ENCODE measurements at regions of chr4 and their contacts with region 1.

Region 1: GRCh38 chr4:173013232-173013930 is 155.2 kb upstream of the GALNT7 start:
- DNase-seq: peak; percentile 57
- CTCF ChIP-seq: peak; percentile 65

Region 2: GRCh38 chr4:172998527-172999469 is 14.6 kb before region 1 on chr4:
- CTCF ChIA-PET with region 1: interaction called, 53 read pairs
- POLR2A ChIA-PET with region 1: no interaction called
- DNase-seq: no peak
- CTCF ChIP-seq: no peak

Region 3: GRCh38 chr4:173091362-173091761 is 78.0 kb after region 1 on chr4:
- CTCF ChIA-PET with region 1: no interaction called
- POLR2A ChIA-PET with region 1: no interaction called
- DNase-seq: no peak
- CTCF ChIP-seq: no peak

Region 4: DNA sequence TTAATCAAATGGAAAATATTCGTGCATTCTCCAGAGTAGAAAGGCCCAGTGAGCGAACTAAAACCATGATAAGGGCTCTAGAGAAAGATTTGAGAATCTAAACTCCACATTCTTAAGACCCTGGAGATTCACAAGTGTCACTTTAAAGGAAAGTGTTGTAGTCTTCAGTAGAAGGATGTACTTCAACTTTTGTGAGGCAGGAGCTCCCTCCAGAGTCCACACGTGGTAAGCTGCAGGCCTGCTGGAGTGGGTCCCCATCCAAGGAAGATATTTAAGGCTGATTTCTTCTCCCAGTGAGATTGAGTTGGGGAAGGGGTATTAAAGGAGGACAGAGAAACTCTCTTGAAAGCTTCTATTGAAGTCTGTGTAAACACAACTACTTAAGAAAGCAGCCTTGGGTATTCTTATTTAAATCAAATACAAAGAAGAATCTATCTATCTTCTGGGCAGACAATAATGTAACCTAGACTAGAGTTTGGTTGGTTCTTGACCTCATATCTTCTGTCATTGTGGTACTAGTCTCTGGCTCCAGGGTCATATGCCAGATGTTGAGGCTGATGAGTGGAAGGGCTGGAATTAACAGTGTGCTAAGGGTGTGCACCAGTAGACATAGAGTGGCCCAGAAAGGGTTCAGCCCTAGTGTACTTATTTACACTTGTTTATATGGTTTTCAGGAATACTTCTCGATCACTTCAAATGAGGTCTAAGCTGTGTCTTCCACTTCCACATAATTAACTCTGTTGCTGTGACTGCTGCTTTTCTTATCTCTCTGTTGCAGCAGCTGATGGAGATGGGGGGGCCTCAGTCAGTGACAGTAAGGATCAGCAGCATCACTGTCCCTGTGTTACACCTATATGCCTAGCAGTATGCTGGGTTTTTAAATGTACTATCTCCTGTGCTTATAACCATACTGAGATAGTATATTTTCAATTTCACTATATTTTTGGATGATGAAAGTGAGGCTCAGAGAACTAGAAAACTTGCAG is 244.6 kb after region 1 on chr4:
- CTCF ChIA-PET with region 1: interaction called, 160 read pairs
- POLR2A ChIA-PET with region 1: no interaction called
- DNase-seq: peak; percentile 44
- CTCF ChIP-seq: peak; percentile 83

Region 5: GRCh38 chr4:173270312-173271027 is 257.1 kb after region 1 on chr4:
- CTCF ChIA-PET with region 1: interaction called, 20 read pairs
- POLR2A ChIA-PET with region 1: no interaction called
- DNase-seq: no peak
- CTCF ChIP-seq: no peak

Region 6: DNA sequence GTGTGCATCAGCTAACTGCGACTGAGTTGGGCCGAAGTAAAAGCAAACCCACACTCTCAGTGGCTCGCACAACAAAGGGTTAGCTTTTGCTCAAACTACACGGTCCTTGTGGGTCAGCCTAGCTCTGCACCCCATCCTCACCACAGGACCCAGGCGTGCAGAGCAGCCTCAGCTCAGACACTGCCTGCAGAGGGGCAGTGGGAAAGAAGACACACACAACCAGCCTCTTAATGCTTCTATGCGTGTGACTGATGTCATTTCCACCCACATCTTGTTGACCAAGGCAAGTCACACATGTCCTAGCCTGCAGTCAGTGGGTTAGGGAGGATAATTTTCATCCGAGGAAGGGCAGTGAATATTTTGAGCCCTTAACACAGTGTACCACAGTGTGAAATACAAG is 280.3 kb after region 1 on chr4:
- CTCF ChIA-PET with region 1: interaction called, 14 read pairs
- POLR2A ChIA-PET with region 1: no interaction called
- DNase-seq: no peak
- CTCF ChIP-seq: no peak

Region 7: DNA sequence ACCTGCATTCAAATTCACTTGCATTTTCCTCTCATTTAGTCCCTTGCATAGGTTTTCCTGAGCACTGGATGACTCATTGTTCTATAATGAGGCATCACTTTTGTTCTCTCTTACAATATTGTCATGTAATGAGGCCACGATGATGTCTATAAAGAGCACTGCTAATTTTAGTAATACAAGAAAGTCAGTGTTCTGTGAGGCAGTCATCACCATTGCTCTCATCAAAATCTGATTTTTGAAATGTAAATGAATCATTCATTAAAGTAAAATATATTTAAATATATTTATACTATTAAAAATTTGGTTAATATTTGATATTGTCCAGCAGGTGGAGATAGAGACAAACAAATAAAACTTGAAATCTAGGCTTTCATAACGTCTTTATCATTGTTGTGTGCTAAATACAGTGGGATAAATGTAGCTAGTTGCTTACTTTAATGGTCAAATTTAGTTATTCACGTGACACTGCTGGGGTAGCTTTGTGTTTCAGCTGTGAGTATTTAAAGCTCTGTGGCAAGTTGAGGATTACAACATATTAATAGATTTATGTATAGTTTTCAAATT is 305.3 kb after region 1 on chr4:
- CTCF ChIA-PET with region 1: interaction called, 17 read pairs
- POLR2A ChIA-PET with region 1: no interaction called
- DNase-seq: no peak
- CTCF ChIP-seq: peak; percentile 9

Region 8: DNA sequence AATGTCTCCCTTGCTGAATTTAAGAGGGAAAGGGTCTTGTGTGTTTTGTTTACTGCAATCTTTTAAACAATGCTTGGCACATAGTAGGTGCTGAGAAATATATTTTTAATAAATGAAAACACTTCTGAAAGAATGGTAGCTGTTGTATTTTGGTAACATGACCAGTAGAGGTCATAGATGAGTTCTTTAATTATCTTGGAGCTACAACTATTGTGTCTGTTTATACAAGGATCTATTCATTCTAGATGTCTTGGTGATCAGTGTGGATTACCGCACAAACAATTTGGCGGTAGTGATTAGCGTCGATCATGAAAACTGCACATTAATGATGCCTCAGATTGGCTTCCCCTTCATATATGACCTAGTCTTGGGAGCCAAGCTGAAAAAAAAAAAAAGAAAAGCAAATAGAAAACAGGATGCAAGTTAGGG is 407.0 kb after region 1 on chr4:
- CTCF ChIA-PET with region 1: interaction called, 20 read pairs
- POLR2A ChIA-PET with region 1: no interaction called
- DNase-seq: peak; percentile 24
- CTCF ChIP-seq: peak; percentile 40